Panc1 (cell line): ENCODE measurements at regions of chr10 and their contacts with region 1.

Region 1: DNA sequence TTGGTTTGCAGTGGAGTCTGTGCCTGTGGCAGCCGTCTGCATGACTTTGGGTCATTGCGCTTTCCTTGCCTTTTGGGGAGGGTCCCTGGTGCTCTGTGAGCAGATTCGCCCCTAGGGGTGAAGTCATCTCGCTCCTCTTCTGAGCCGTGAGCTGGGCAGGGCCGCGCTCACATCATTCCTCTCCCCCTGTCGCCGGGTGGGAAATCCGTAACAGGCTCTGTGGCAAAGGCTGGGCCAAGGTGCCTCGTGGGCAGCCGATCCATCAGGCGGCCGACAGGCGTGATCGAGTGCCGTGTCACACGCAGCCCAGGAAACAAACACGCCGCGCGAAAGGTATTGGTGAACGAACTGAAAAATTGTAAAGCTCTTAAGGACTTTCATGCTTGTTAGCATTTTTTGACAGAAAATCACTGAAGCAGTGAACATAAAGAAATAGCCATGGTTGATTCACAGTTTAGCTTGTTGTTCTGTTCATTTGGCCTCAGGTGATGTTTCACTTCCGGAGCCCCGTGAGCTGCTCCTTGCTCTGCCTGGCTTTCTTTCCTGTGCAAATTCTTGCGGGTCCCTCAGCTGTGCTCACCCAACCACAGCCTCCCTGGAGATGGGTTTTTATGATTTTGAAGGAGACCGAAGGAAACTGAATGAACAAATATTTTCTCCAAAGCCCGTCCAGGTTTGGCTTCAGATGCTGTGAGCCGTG is 122.1 kb downstream of the NKX6-2 start:
- DNase-seq: no peak
- ATAC-seq: no peak
- H3K4me3 ChIP-seq: no peak overlapping the region
- H3K27ac ChIP-seq: peak overlapping the region; percentile 55
- H3K4me1 ChIP-seq: peaks cover 54% of the 10 kb centered on the region
- H3K27me3 ChIP-seq: no peaks in the 10 kb centered on the region
- CTCF ChIP-seq: no peak

Region 2: DNA sequence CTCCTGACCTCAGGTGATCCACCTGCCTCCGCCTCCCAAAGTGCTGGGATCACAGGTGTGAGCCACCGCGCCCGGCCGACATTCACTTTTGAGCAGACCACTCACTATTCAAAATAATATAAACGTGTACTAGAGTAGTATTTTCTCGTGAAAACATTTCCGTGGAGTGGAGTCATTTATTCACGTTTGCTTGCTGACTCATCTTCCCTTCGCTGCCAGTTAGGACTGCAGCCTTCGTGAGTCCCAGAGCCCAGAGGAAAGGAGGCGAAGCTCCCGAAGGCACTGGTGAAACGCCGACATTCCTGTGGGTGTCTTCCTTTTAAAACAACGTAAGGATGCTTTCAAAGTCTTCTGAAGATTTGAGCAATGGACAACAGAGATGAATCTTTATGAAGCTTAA is 137.1 kb before region 1 on chr10:
- CTCF ChIA-PET with region 1: no interaction called
- POLR2A ChIA-PET with region 1: no interaction called
- in situ Hi-C with region 1: no loop called
- intact Hi-C with region 1: no loop called
- DNase-seq: no peak
- ATAC-seq: no peak
- H3K4me3 ChIP-seq: no peak overlapping the region
- H3K27ac ChIP-seq: no peak overlapping the region
- H3K4me1 ChIP-seq: peaks cover 11% of the 10 kb centered on the region
- H3K27me3 ChIP-seq: no peaks in the 10 kb centered on the region
- CTCF ChIP-seq: no peak

Region 3: GRCh38 chr10:132788180-132788830 is 124.5 kb after region 1 on chr10:
- CTCF ChIA-PET with region 1: no interaction called
- POLR2A ChIA-PET with region 1: no interaction called
- in situ Hi-C with region 1: no loop called
- intact Hi-C with region 1: loop called (anchors 5 kb)
- DNase-seq: no peak
- ATAC-seq: peak; percentile 66
- H3K4me3 ChIP-seq: peak overlapping the region; percentile 34 to 48
- H3K27ac ChIP-seq: no peak overlapping the region
- H3K4me1 ChIP-seq: peaks cover 7% of the 10 kb centered on the region; the same call in 1 of the 2 replicates
- H3K27me3 ChIP-seq: no peaks in the 10 kb centered on the region; the same call in 1 of the 2 replicates
- CTCF ChIP-seq: peak; percentile 79

Region 4: GRCh38 chr10:133110133-133110532 is 446.3 kb after region 1 on chr10:
- CTCF ChIA-PET with region 1: no interaction called
- POLR2A ChIA-PET with region 1: no interaction called
- in situ Hi-C with region 1: no loop called
- intact Hi-C with region 1: no loop called
- DNase-seq: no peak
- ATAC-seq: peak; percentile 80
- H3K4me3 ChIP-seq: no peak overlapping the region
- H3K27ac ChIP-seq: no peak overlapping the region
- H3K4me1 ChIP-seq: peaks cover 8% of the 10 kb centered on the region; the same call in 1 of the 2 replicates
- H3K27me3 ChIP-seq: no peaks in the 10 kb centered on the region
- CTCF ChIP-seq: no peak